Aorta (tissue), 5 donors: ENCODE measurements at regions of chr20 and their contacts with region 1.

Region 1: DNA sequence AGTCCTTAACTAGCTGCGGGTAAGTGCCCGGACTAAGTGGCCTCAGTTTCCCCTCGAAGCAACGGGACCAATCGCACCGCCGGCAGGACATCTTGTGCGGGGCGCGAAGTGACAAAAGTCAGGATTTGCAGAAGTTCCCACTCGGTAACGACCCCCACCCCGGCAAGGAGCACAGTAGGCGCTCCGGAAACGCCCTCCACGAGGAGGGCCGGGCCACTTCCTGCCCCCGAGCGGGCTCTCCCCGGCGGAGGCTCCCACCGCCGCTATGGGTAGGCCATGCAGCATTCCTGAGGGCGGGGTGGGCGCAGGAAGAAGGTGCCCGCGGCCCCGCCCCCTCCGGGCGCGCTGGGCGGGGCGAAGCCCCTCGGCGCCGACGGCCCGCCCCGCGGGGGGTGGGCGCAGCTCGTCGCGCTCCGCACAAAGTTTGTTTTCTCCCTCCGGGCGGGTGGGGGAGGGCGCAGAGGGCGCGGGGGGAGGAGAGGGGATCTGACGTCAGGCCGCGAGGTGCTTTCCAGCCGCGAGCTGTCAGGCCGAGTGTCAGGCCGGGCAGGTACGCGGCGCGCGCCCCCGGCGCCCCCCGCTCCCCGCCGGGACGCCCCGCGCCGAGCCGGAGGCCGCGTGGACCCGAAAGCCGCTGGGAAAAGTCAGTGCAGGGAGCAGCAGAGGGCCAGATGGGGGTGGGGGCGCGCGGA is at the start of gene TGIF2:
- DNase-seq: peak; percentile 88 to 94
- ATAC-seq: peak; percentile 92
- H3K4me3 ChIP-seq: peak within 1 kb of the TSS; percentile 48 to 69
- H3K27ac ChIP-seq: peak within 1 kb of the TSS; percentile 46
- H3K4me1 ChIP-seq: no peaks in the 10 kb centered on the region
- H3K27me3 ChIP-seq: no peaks in the 10 kb centered on the region
- total RNA-seq, gene TGIF2: 11.8 to 12.8 TPM

Region 2: GRCh38 chr20:36605399-36606157 is 32.3 kb after region 1 on chr20 and contains the start of gene RAB5IF:
- intact Hi-C with region 1: loop called in 1 of 2 experiments (anchors 5 kb)
- DNase-seq: peak; percentile 100
- ATAC-seq: peak; percentile 99
- H3K4me3 ChIP-seq: peak within 1 kb of the TSS; percentile 57 to 95
- H3K27ac ChIP-seq: peak within 1 kb of the TSS in 1 of 2 donors; percentile 66
- H3K4me1 ChIP-seq: peaks cover 0 to 6% of the 10 kb centered on the region in 2 donors
- H3K27me3 ChIP-seq: no peaks in the 10 kb centered on the region
- total RNA-seq, gene RAB5IF: 39.8 to 48.1 TPM